Transverse colon (tissue), 4 donors: ENCODE measurements at regions of chr2 and their contacts with region 1.

Region 1: DNA sequence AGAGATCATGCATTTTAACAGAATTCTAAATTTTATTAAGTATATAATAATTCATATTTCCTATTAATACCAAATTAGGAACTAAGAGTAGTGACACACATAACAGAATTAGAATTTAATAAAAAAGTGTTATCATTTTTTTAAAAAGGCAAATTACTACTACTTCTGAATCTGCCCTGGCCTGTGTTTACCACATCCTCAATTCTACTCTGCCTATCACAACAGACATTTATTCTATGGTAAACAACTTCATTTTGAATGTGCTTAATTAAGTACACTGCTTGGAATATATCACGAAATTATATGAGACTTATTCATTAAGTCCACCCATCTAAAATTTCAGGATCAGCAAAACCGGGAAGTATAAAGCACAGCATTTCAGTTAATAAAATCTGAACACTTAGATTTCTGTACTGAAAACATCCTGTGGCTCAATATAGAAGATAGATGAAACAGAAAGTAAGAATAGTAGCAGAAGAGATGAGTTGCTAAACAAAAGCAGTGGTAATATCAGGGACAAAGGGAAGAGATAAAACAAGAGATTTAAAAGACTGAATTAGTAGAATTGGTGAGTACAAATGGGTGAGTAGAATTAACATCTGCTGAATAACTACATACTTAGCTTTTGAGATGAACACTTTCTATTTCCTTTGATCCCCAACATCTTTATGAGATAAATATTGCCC is 3.7 kb downstream of the SMC6 start:
- DNase-seq: no peak
- H3K4me3 ChIP-seq: no peak overlapping the region
- H3K27ac ChIP-seq: no peak overlapping the region
- H3K4me1 ChIP-seq: peaks cover 5 to 21% (median 15%) of the 10 kb centered on the region in 4 donors
- H3K27me3 ChIP-seq: no peaks in the 10 kb centered on the region
- CTCF ChIP-seq: no peak
- EP300 ChIP-seq: no peak
- POLR2A ChIP-seq: no peak

Region 2: GRCh38 chr2:17733599-17733998 is 16.3 kb before region 1 on chr2:
- in situ Hi-C with region 1: no loop called
- intact Hi-C with region 1: no loop called
- DNase-seq: no peak
- H3K4me3 ChIP-seq: no peak overlapping the region
- H3K27ac ChIP-seq: no peak overlapping the region
- H3K4me1 ChIP-seq: no peaks in the 10 kb centered on the region
- H3K27me3 ChIP-seq: no peaks in the 10 kb centered on the region
- CTCF ChIP-seq: no peak
- EP300 ChIP-seq: no peak
- POLR2A ChIP-seq: no peak

Region 3: DNA sequence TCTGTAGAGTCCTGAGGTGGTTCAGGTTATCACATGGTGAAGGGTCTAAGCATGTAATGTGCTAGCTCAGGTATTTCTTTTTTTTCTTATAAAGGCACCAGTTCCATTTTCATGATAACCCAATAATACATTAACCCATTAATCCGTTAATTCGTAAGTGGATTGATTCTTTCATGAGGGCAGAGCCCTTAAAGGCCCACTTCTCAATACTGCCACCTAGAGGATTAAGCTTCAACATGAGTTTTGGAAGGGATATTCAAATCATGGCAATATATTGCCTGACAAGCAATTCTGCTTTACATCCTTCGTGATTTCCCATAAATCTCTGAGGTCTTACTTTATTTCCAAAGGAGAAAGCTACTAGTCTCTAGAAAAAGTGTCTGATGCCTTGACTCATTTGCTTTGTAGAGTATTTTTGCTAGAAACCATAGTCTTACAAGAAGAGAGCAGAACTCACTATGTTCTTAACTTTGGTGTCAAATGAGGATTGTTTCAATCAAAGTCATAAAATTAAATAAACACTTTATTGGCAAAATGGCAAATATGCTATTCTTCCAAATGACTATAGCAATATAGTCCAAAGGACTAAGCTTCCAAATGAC is 399.9 kb after region 1 on chr2:
- in situ Hi-C with region 1: loop called in 1 of 4 experiments (anchors 25 kb)
- intact Hi-C with region 1: no loop called
- DNase-seq: no peak
- H3K4me3 ChIP-seq: no peak overlapping the region
- H3K27ac ChIP-seq: no peak overlapping the region
- H3K4me1 ChIP-seq: no peaks in the 10 kb centered on the region
- H3K27me3 ChIP-seq: no peaks in the 10 kb centered on the region
- CTCF ChIP-seq: peak; percentile 51 to 78 (median 68)
- EP300 ChIP-seq: no peak
- POLR2A ChIP-seq: no peak